Cardiac septum (tissue), 1 donor: ENCODE measurements at regions of chr7 and their contacts with region 1.

Region 1: GRCh38 chr7:155213955-155214740 is 83.5 kb upstream of the INSIG1 start:
- DNase-seq: peak; percentile 67

Region 2: GRCh38 chr7:155252444-155252887 is 38.3 kb after region 1 on chr7:
- intact Hi-C with region 1: loop called (anchors 5 kb)
- DNase-seq: no peak